Activated T-helper 2 cell treated with anti-CD3 and anti-CD28 coated beads, Interferon-gamma antibody, Interleukin-2, Interleukin-4, amounts not matched to agents 10 μg/mL and 5 μg/mL and 100 μg/mL, durations not matched to agents 14 hours and 24 hours and 36 hours (primary cell): ENCODE measurements at regions of chr10 and their contacts with region 1.

Region 1: GRCh38 chr10:79374312-79375191 is 27.3 kb downstream of the PPIF start:
- DNase-seq: peak; percentile 58
- H3K4me3 Mint-ChIP-seq: no peak overlapping the region
- H3K27ac Mint-ChIP-seq: no peak overlapping the region
- H3K4me1 Mint-ChIP-seq: peaks cover 3% of the 10 kb centered on the region
- H3K27me3 Mint-ChIP-seq: peaks cover 21% of the 10 kb centered on the region

Region 2: GRCh38 chr10:79487296-79488194 is 113.0 kb after region 1 on chr10:
- intact Hi-C with region 1: loop called (anchors 5 kb)
- DNase-seq: no peak
- H3K4me3 Mint-ChIP-seq: no peak overlapping the region
- H3K27ac Mint-ChIP-seq: no peak overlapping the region
- H3K4me1 Mint-ChIP-seq: no peaks in the 10 kb centered on the region
- H3K27me3 Mint-ChIP-seq: peaks cover 3% of the 10 kb centered on the region